B cell (primary cell): ENCODE measurements at regions of chr2 and their contacts with region 1.

Region 1: DNA sequence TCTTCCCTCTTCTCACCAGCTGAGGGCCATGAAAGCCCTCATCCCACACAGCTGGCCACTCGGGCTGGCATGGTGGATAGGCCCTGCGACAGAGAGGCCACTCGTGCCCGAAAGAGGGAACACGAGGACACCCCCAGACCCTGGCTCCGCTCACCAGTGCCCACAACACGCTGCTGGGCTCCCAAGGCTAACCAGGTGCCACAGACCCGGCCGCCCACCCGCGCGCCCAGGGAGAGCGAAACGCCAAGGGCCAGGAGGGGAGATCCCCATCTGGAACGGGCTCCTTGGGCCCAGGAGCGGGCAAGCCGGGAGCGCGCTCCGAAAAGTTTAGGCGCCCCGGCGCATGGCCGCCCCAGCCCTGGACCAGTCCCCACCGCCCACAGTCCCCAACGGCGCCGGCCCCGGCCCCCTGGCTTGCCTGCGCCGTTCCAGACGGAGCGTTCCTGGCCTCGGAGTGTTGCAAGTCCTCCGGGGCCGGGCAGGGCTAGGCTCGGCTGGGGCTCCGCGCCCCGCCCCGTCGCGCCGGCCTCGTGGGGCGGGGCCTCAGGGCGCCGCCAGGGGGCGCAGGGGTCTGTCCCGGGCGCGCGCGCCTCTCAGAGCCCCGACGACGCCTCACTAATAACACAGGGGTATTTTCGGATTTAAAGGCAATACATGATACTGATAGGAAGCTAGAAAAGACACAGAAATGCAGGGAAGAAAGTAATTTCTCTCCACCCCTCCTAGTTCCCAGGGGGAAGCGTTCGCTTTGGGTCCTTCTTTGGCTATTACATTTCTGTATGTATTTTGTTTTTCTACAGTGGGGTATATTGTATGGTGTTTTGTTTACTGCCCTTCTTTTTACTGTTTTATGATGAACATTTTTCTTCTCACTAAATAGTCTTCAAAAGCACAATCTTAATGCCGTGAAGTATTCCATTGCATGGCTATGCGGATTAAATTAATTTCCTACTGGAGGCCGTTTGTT is at the start of gene TMBIM1:
- DNase-seq: peak; percentile 90
- ATAC-seq: peak; percentile 72
- H3K4me3 ChIP-seq: peak within 1 kb of the TSS; percentile 50 to 95 (median 87)
- H3K4me3 Mint-ChIP-seq: peak within 1 kb of the TSS; percentile 89
- H3K27ac ChIP-seq: peak within 1 kb of the TSS; percentile 92 to 98
- H3K27ac Mint-ChIP-seq: peak within 1 kb of the TSS; percentile 93
- H3K4me1 ChIP-seq: peaks cover 57 to 71% of the 10 kb centered on the region in 2 donors
- H3K4me1 Mint-ChIP-seq: peaks cover 60% of the 10 kb centered on the region
- H3K27me3 ChIP-seq: no peaks in the 10 kb centered on the region
- H3K27me3 Mint-ChIP-seq: no peaks in the 10 kb centered on the region
- CTCF ChIP-seq: peak; percentile 90
- total RNA-seq, gene TMBIM1: 128 and 137 TPM in 2 replicates

Region 2: GRCh38 chr2:218322895-218323808 is 30.8 kb after region 1 on chr2:
- CTCF ChIA-PET with region 1: interaction called, 4 read pairs
- POLR2A ChIA-PET with region 1: no interaction called
- intact Hi-C with region 1: loop called (anchors 2 kb)
- DNase-seq: peak; percentile 74
- ATAC-seq: peak; percentile 79
- H3K4me3 ChIP-seq: peak overlapping the region in 4 of 5 experiments; percentile 31 to 63 (median 58)
- H3K4me3 Mint-ChIP-seq: peak overlapping the region; percentile 85
- H3K27ac ChIP-seq: peak overlapping the region in 1 of 2 donors; percentile 38
- H3K27ac Mint-ChIP-seq: peak overlapping the region; percentile 41
- H3K4me1 ChIP-seq: peaks cover 34 to 40% of the 10 kb centered on the region in 2 donors
- H3K4me1 Mint-ChIP-seq: peaks cover 41% of the 10 kb centered on the region
- H3K27me3 ChIP-seq: peaks cover 0 to 11% (median 5%) of the 10 kb centered on the region in 4 experiments
- H3K27me3 Mint-ChIP-seq: no peaks in the 10 kb centered on the region
- CTCF ChIP-seq: no peak